ENCODE measurements at regions of chr15 and their contacts with region 1.

Region 1: GRCh38 chr15:51227940-51228783 is 110.2 kb downstream of the CYP19A1 start:
- DNase-seq: peak; percentile 74 to 88 (median 82)
- ATAC-seq: peak; percentile 95
- H3K4me3 ChIP-seq: no peak overlapping the region
- H3K27ac ChIP-seq: peak overlapping the region; percentile 82
- H3K4me1 ChIP-seq: peaks cover 11 to 31% of the 10 kb centered on the region in 2 experiments
- H3K27me3 ChIP-seq: peaks cover 0 to 3% of the 10 kb centered on the region in 2 experiments; a peak in 3 of 5 replicates
- CTCF ChIP-seq: no peak
- EP300 ChIP-seq: peak; percentile 67; the same call in 1 of the 2 replicates
- POLR2A ChIP-seq: no peak
- RAD21 ChIP-seq: no peak

Region 2: GRCh38 chr15:50562735-50563640 is 665.2 kb before region 1 on chr15:
- CTCF ChIA-PET with region 1: no interaction called
- POLR2A ChIA-PET with region 1: no interaction called
- in situ Hi-C with region 1: no loop called
- intact Hi-C with region 1: no loop called
- DNase-seq: no peak
- ATAC-seq: no peak
- H3K4me3 ChIP-seq: no peak overlapping the region
- H3K27ac ChIP-seq: no peak overlapping the region
- H3K4me1 ChIP-seq: no peaks in the 10 kb centered on the region
- H3K27me3 ChIP-seq: no peaks in the 10 kb centered on the region
- CTCF ChIP-seq: no peak
- EP300 ChIP-seq: no peak
- POLR2A ChIP-seq: no peak
- RAD21 ChIP-seq: no peak

Region 3: GRCh38 chr15:51274946-51275345 is 46.8 kb after region 1 on chr15:
- CTCF ChIA-PET with region 1: no interaction called
- POLR2A ChIA-PET with region 1: no interaction called
- in situ Hi-C with region 1: no loop called
- intact Hi-C with region 1: loop called (anchors 5 kb)
- DNase-seq: no peak
- ATAC-seq: no peak
- H3K4me3 ChIP-seq: no peak overlapping the region
- H3K27ac ChIP-seq: no peak overlapping the region
- H3K4me1 ChIP-seq: no peaks in the 10 kb centered on the region
- H3K27me3 ChIP-seq: peaks cover 13 to 14% of the 10 kb centered on the region in 2 experiments; a peak in 4 of 5 replicates
- CTCF ChIP-seq: no peak
- EP300 ChIP-seq: no peak
- POLR2A ChIP-seq: no peak
- RAD21 ChIP-seq: no peak

Region 4: DNA sequence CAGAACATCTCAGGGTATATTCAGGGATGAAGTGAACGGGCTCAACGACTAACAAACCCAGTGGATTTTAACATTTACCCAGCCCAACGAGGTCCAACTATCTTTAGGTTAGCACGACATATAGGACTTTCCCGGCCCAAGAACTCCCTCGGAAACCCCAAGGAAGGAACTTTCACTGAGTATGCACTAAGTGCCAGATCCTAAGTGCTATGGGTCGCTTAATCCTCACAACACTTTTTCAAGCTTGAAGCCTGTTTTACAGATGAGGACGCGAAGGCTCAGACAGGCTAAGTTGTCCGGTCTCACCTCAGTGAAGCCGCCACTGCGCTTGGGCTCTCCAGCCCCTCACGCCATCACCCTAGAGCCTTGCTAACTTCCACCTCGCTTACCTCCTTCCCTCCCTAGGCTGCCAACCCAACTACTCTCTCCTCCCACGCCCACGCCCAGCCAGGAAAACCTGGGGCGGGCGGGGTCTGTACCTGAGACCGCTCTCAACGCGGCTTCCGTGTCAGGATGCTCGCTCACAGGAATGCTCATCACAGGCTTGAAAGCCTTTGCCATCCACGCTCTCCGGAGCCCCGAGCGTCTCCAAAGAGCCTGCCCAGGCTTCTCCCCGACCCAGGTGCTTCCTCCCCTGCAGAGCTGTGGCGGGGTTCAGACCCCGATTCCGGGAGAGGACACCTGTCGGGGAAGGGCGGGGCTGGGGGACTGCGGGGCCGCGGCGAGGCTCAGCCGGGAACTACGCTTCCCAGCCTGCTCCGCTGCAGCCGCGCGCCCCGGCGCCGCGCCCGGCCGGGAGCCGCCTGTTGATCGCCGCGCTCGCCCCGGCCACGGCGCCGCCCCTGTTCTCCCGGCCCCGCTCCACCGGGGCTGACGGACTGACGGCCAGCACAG is 522.9 kb after region 1 on chr15 and contains the start of gene TMOD2:
- CTCF ChIA-PET with region 1: no interaction called
- POLR2A ChIA-PET with region 1: no interaction called
- in situ Hi-C with region 1: no loop called
- intact Hi-C with region 1: no loop called
- DNase-seq: peak; percentile 66 to 73 (median 70)
- ATAC-seq: peak; percentile 91
- H3K4me3 ChIP-seq: peak within 1 kb of the TSS; percentile 64
- H3K27ac ChIP-seq: no peak within 1 kb of the TSS; the same call in 2 of the 3 replicates
- H3K4me1 ChIP-seq: peaks cover 13 to 17% of the 10 kb centered on the region in 2 experiments; a peak in 4 of 5 replicates
- H3K27me3 ChIP-seq: no peaks in the 10 kb centered on the region; a peak in 1 of 5 replicates
- CTCF ChIP-seq: no peak
- EP300 ChIP-seq: no peak
- POLR2A ChIP-seq: no peak
- RAD21 ChIP-seq: no peak
- polyA plus RNA-seq, gene TMOD2: 0.49 to 0.85 TPM

Measured in K562 (cell line).